Panc1 (cell line): ENCODE measurements at regions of chr15 and their contacts with region 1.

Region 1: GRCh38 chr15:60195611-60196010 is 191.5 kb downstream of the FOXB1 start:
- DNase-seq: no peak
- ATAC-seq: no peak
- H3K4me3 ChIP-seq: no peak overlapping the region
- H3K27ac ChIP-seq: no peak overlapping the region
- H3K4me1 ChIP-seq: no peaks in the 10 kb centered on the region
- H3K27me3 ChIP-seq: peaks cover 8% of the 10 kb centered on the region
- CTCF ChIP-seq: no peak

Region 2: GRCh38 chr15:59622289-59622688 is 573.3 kb before region 1 on chr15:
- CTCF ChIA-PET with region 1: interaction called, 17 read pairs
- POLR2A ChIA-PET with region 1: no interaction called
- in situ Hi-C with region 1: no loop called
- intact Hi-C with region 1: no loop called
- DNase-seq: peak; percentile 45
- ATAC-seq: peak; percentile 95
- H3K4me3 ChIP-seq: no peak overlapping the region
- H3K27ac ChIP-seq: no peak overlapping the region
- H3K4me1 ChIP-seq: no peaks in the 10 kb centered on the region
- H3K27me3 ChIP-seq: peaks cover 7% of the 10 kb centered on the region; the same call in 1 of the 2 replicates
- CTCF ChIP-seq: peak; percentile 79

Region 3: GRCh38 chr15:60745469-60746061 is 550.0 kb after region 1 on chr15:
- CTCF ChIA-PET with region 1: no interaction called
- POLR2A ChIA-PET with region 1: no interaction called
- in situ Hi-C with region 1: no loop called
- intact Hi-C with region 1: no loop called
- DNase-seq: no peak
- ATAC-seq: no peak
- H3K4me3 ChIP-seq: no peak overlapping the region
- H3K27ac ChIP-seq: no peak overlapping the region
- H3K4me1 ChIP-seq: no peaks in the 10 kb centered on the region
- H3K27me3 ChIP-seq: peaks cover 2% of the 10 kb centered on the region; the same call in 1 of the 2 replicates
- CTCF ChIP-seq: no peak